GM13976 (cell line): ENCODE measurements at regions of chr16 and their contacts with region 1.

Region 1: DNA sequence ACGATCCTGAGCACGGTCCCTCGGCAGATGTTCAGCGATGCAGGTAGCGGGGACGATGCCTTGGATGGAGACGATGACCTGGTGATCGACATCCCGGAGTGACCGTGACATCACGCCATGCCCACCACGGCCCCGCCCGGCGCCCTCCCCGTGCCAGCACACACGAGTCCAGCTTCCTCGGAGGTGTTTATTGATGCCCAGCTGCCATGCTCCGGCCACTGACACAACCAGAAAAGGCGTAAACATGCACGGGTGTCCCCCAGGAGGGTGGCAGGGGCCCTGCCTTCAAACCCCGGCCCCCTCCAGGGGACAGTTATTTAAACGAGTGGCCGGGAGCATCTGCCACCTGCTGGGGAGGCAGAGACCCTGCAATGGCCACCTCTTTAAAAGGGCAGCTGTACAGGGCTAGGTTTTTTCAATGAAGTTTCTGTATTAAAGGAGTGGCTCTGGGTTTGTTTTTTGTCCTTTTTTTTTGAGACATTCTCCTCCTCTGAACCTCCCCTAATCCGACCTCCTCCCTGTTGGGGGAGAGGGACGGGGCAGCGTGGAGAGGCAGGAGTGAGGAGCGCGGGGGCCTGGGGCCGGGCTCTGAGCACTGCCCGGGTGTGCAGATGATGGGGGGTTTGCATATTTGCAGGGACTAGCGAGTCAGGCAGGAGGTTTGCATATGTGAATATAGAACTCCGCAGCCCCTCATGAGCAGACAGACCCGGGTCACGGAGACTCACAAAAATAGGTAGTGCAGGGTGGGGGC is 5.3 kb downstream of the DOC2A start:
- DNase-seq: peak; percentile 87
- CTCF ChIP-seq: peak; percentile 67

Region 2: GRCh38 chr16:29678691-29679267 is 326.7 kb before region 1 on chr16 and contains the start of gene QPRT:
- in situ Hi-C with region 1: loop called (anchors 25 kb)
- DNase-seq: peak; percentile 87
- CTCF ChIP-seq: no peak

Region 3: GRCh38 chr16:29900102-29900887 is 105.2 kb before region 1 on chr16 and contains the start of gene ASPHD1:
- in situ Hi-C with region 1: no loop called
- DNase-seq: peak; percentile 92
- CTCF ChIP-seq: no peak

Region 4: GRCh38 chr16:30104494-30104968 is 99.0 kb after region 1 on chr16:
- in situ Hi-C with region 1: no loop called
- DNase-seq: no peak
- CTCF ChIP-seq: no peak